ENCODE measurements at regions of chr11 and their contacts with region 1.

Region 1: DNA sequence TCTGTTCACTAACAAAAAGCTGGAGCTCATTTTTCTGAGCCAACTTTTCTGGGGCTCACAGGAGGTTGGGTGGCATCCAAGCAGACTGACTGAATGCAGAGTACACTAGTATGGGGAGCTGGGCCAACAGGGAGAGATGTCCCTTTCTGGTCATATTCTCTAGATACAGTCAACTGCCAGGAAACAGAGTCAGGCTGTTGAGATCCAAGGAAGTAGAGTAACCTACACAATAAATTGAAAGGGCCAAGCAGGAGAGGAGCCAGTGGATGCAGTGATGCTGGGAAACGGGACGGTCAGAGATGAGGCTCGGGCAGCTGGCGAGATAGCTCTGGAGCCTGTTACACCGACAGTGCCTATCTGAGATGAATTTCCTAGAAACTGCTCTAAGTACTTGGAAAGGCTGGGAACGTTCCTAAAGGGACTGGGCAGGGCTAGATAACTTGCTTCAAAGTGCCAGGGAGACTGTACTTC is 71.1 kb downstream of the LARGE2 start:
- DNase-seq: no peak
- H3K4me3 ChIP-seq: no peak overlapping the region
- H3K27ac ChIP-seq: no peak overlapping the region
- H3K4me1 ChIP-seq: peaks cover 18 to 38% (median 29%) of the 10 kb centered on the region in 4 experiments; a peak in 6 of 7 replicates
- H3K27me3 ChIP-seq: no peaks in the 10 kb centered on the region
- CTCF ChIP-seq: no peak
- EP300 ChIP-seq: no peak
- POLR2A ChIP-seq: no peak
- RAD21 ChIP-seq: no peak

Region 2: GRCh38 chr11:45794169-45794568 is 199.4 kb before region 1 on chr11:
- CTCF ChIA-PET with region 1: no interaction called
- POLR2A ChIA-PET with region 1: no interaction called
- DNase-seq: peak in 1 of 2 experiments; percentile 33
- H3K4me3 ChIP-seq: no peak overlapping the region
- H3K27ac ChIP-seq: no peak overlapping the region
- H3K4me1 ChIP-seq: no peaks in the 10 kb centered on the region; a peak in 1 of 7 replicates
- H3K27me3 ChIP-seq: no peaks in the 10 kb centered on the region
- CTCF ChIP-seq: no peak
- EP300 ChIP-seq: no peak
- POLR2A ChIP-seq: no peak
- RAD21 ChIP-seq: no peak

Region 3: GRCh38 chr11:45982656-45983470 is 10.7 kb before region 1 on chr11:
- CTCF ChIA-PET with region 1: interaction called, 15 read pairs
- POLR2A ChIA-PET with region 1: interaction called, 74 read pairs
- DNase-seq: peak; percentile 60 to 84
- H3K4me3 ChIP-seq: peak overlapping the region in 1 of 4 experiments; percentile 40; a peak in 4 of 8 replicates
- H3K27ac ChIP-seq: peak overlapping the region; percentile 58; the same call in 1 of the 2 replicates
- H3K4me1 ChIP-seq: peaks cover 5 to 9% (median 9%) of the 10 kb centered on the region in 4 experiments; a peak in 5 of 7 replicates
- H3K27me3 ChIP-seq: no peaks in the 10 kb centered on the region
- CTCF ChIP-seq: no peak
- EP300 ChIP-seq: no peak
- POLR2A ChIP-seq: no peak
- RAD21 ChIP-seq: no peak

Region 4: DNA sequence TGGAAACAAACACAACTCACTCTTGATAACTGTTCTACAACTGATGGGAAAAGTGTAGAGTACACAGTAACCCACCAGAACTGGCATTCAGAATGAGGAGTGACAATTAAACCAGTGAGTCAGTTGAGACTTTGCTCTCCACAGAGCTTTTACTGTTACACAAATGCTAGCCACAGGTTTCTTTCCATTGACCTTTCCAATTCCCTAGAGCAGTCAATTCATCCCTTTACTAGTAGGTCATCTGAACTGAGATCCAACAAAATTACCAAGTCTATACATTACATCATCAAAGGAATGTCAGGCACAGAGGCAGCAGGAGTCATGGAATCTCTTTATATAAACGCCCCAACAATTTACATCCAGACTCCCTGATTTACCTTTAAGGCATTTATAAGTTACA is 61.8 kb after region 1 on chr11:
- CTCF ChIA-PET with region 1: no interaction called
- POLR2A ChIA-PET with region 1: no interaction called
- DNase-seq: peak in 1 of 2 experiments; percentile 34
- H3K4me3 ChIP-seq: peak overlapping the region in 1 of 4 experiments; percentile 26; a peak in 1 of 8 replicates
- H3K27ac ChIP-seq: no peak overlapping the region
- H3K4me1 ChIP-seq: peaks cover 3 to 32% (median 16%) of the 10 kb centered on the region in 4 experiments; a peak in 6 of 7 replicates
- H3K27me3 ChIP-seq: no peaks in the 10 kb centered on the region
- CTCF ChIP-seq: no peak
- EP300 ChIP-seq: no peak
- POLR2A ChIP-seq: peak in 1 of 2 experiments; percentile 56; a peak in 1 of 3 replicates
- RAD21 ChIP-seq: no peak

Region 5: DNA sequence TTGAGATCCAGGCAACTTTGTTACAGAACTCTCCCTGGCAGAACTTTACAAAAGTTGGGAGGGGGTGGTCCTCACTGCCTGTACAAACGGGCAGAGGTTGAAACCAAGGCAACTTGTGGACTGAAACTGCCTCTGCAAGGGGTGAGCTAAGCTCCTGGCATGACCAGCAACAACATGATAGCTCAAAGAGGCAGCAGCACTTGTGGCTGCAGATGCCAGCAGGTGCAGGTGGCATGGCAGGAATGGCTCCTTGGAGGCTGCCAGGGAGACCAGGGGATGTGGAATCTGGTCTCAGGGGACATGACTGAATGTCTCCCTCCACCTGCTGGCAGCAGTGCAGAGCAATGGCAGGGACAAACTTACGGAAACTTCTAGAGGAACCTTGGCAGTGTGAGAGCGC is 166.5 kb after region 1 on chr11:
- CTCF ChIA-PET with region 1: no interaction called
- POLR2A ChIA-PET with region 1: no interaction called
- DNase-seq: no peak
- H3K4me3 ChIP-seq: no peak overlapping the region
- H3K27ac ChIP-seq: no peak overlapping the region
- H3K4me1 ChIP-seq: no peaks in the 10 kb centered on the region
- H3K27me3 ChIP-seq: no peaks in the 10 kb centered on the region
- CTCF ChIP-seq: peak; percentile 8 to 35 (median 24); a peak in 2 of 4 replicates
- EP300 ChIP-seq: no peak
- POLR2A ChIP-seq: no peak
- RAD21 ChIP-seq: peak; percentile 14 to 45; a peak in 2 of 4 replicates